Transverse colon (tissue), 4 donors: ENCODE measurements at regions of chr13 and their contacts with region 1.

Region 1: GRCh38 chr13:101757446-101758039 is 305.1 kb downstream of the ITGBL1 start:
- DNase-seq: no peak
- H3K4me3 ChIP-seq: no peak overlapping the region
- H3K27ac ChIP-seq: no peak overlapping the region
- H3K4me1 ChIP-seq: no peaks in the 10 kb centered on the region
- H3K27me3 ChIP-seq: no peaks in the 10 kb centered on the region
- CTCF ChIP-seq: peak; percentile 41 to 60 (median 43)
- EP300 ChIP-seq: no peak
- POLR2A ChIP-seq: no peak

Region 2: DNA sequence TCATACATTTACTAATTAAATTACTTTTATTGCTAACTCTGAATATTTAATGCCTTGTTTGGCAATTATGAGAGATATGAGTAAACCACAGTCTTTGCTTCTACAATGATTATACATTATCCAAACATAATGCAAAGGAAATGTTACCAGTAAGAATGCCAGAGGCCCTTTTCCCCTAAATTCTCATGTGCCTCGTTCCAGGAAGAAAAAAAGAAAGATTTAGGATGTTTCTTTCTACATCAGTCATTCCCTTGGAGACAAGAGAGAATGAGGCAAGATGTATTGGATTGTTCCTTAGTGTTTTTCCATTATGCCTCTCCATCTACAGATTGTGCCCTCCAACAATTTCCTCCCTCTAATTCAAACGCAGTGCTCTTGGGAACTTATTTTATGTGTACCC is 254.9 kb before region 1 on chr13:
- in situ Hi-C with region 1: loop called in 2 of 4 experiments (anchors 5 to 25 kb)
- intact Hi-C with region 1: no loop called
- DNase-seq: no peak
- H3K4me3 ChIP-seq: no peak overlapping the region
- H3K27ac ChIP-seq: no peak overlapping the region
- H3K4me1 ChIP-seq: no peaks in the 10 kb centered on the region
- H3K27me3 ChIP-seq: no peaks in the 10 kb centered on the region
- CTCF ChIP-seq: no peak
- EP300 ChIP-seq: no peak
- POLR2A ChIP-seq: no peak

Region 3: GRCh38 chr13:101514788-101515187 is 242.8 kb before region 1 on chr13:
- in situ Hi-C with region 1: loop called in 1 of 4 experiments (anchors 25 kb)
- intact Hi-C with region 1: no loop called
- DNase-seq: no peak
- H3K4me3 ChIP-seq: no peak overlapping the region
- H3K27ac ChIP-seq: no peak overlapping the region
- H3K4me1 ChIP-seq: no peaks in the 10 kb centered on the region
- H3K27me3 ChIP-seq: no peaks in the 10 kb centered on the region
- CTCF ChIP-seq: peak; percentile 40 to 60 (median 53)
- EP300 ChIP-seq: no peak
- POLR2A ChIP-seq: no peak

Region 4: DNA sequence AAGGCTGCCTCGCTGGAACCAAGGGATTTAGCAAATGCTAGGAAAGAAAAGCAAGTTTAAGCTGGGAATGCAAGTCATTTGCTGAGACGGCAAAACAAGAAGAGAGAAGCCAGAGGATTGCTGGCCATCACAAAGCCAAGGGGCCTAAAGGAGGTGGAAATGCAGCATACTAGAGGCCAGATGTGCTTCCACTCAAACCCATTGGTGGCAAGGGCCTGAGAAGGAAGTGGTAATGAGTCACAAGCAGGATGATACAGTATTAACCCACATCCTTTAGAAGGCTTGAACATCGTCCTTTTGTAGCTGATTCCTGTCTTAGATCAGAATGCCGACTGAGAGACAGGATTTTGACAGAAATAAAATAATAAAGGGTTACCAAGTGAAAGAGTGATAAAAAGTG is 236.9 kb before region 1 on chr13:
- in situ Hi-C with region 1: loop called in 2 of 4 experiments (anchors 5 to 25 kb)
- intact Hi-C with region 1: no loop called
- DNase-seq: no peak
- H3K4me3 ChIP-seq: no peak overlapping the region
- H3K27ac ChIP-seq: no peak overlapping the region
- H3K4me1 ChIP-seq: no peaks in the 10 kb centered on the region
- H3K27me3 ChIP-seq: no peaks in the 10 kb centered on the region
- CTCF ChIP-seq: no peak
- EP300 ChIP-seq: no peak
- POLR2A ChIP-seq: no peak

Region 5: GRCh38 chr13:102277286-102277685 is 519.7 kb after region 1 on chr13:
- in situ Hi-C with region 1: no loop called
- intact Hi-C with region 1: no loop called
- DNase-seq: no peak
- H3K4me3 ChIP-seq: no peak overlapping the region
- H3K27ac ChIP-seq: peak overlapping the region in 1 of 4 donors; percentile 51
- H3K4me1 ChIP-seq: no peaks in the 10 kb centered on the region
- H3K27me3 ChIP-seq: no peaks in the 10 kb centered on the region
- CTCF ChIP-seq: no peak
- EP300 ChIP-seq: no peak
- POLR2A ChIP-seq: no peak